ENCODE measurements at regions of chr5 and their contacts with region 1.

Region 1: DNA sequence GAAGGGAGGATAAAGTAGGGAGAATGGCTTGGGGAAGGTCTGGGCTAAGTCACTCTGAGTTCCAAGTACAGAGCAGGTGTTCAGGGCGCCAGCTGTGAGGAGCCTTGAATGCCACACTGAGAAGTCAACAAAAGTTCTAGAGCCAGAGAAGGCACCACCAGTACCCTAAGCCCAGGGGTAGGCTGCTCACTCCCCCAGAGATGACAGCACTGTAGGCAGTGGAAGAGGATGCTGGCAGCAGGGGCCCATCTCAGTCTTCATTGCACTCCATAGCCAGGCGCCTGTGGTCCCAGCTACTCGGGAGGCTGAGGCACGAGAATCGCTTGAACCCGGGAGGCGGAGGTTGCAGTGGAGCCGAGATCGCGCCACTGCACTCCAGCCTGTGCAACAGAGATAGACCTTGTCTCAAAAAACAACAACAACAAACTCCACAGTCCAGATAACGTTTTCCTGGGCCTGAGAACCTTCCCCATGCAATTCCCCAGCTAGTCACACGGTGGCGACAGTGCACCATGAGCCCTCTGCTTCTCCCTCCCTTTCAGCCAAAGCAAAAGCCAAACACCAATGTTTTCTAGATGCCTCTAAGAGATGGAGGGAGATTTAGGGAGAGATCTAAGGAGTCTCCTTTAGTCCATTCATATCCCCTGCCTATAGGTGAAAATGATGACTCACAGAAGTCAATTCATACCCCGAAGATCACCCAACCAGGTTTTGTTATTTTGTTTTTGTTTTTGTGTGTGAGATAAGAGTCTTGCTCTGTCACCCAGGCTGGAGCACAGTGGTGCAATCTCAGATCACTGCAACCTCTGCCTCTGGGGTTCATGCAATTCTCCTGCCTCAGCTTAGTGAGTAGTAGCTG is 19.8 kb upstream of the NSD1 start:
- DNase-seq: no peak
- H3K4me3 ChIP-seq: no peak overlapping the region
- H3K27me3 ChIP-seq: no peaks in the 10 kb centered on the region
- CTCF ChIP-seq: peak; percentile 99

Region 2: DNA sequence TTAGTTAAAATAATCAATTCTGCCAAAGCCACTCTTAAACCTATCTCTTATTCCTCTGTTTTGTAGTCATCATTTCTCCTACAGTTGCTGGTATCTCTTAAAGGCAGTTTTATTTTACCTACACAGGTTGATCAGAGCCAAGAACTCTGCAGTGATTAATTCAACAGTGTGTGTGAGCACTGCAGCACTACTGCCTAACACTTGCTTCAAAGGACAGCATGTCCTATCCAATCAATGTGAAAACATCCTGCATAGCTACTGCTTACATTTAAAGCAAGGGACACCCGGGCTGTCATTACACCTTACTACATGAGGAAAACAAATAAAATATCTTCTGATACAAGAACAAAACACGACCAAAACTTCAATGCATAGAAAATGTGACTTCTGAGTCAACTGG is 169.5 kb before region 1 on chr5:
- CTCF ChIA-PET with region 1: no interaction called
- POLR2A ChIA-PET with region 1: no interaction called
- DNase-seq: no peak
- H3K4me3 ChIP-seq: no peak overlapping the region
- H3K27me3 ChIP-seq: no peaks in the 10 kb centered on the region
- CTCF ChIP-seq: no peak

Region 3: DNA sequence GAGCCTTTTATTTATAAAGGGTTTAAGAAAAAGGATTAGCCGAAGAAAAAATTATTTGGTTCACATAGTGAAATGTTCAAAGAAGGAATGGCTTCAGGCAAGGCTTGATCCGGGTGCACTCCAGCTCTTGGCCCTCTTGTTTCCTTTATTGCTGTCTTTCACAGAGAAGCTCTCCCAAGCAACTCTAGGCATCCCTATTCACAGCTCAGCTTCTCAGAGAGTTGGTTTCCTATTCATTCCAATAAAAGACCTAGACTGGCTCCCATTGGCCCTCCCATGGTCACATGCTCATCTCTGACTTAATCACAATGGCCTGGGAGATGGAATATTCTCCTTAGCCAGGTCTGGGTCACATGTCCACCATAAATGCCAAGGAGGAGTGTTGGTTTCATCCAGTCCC is 36.5 kb before region 1 on chr5:
- CTCF ChIA-PET with region 1: interaction called, 105 read pairs
- POLR2A ChIA-PET with region 1: no interaction called
- DNase-seq: no peak
- H3K4me3 ChIP-seq: no peak overlapping the region
- H3K27me3 ChIP-seq: no peaks in the 10 kb centered on the region
- CTCF ChIP-seq: no peak

Region 4: GRCh38 chr5:177124486-177124991 is 10.7 kb after region 1 on chr5:
- CTCF ChIA-PET with region 1: interaction called, 33 read pairs
- POLR2A ChIA-PET with region 1: no interaction called
- DNase-seq: no peak
- H3K4me3 ChIP-seq: no peak overlapping the region
- H3K27me3 ChIP-seq: no peaks in the 10 kb centered on the region
- CTCF ChIP-seq: no peak

Region 5: GRCh38 chr5:177271113-177271512 is 157.3 kb after region 1 on chr5:
- CTCF ChIA-PET with region 1: interaction called, 18 read pairs
- POLR2A ChIA-PET with region 1: no interaction called
- DNase-seq: no peak
- H3K4me3 ChIP-seq: no peak overlapping the region
- H3K27me3 ChIP-seq: no peaks in the 10 kb centered on the region
- CTCF ChIP-seq: no peak

Region 6: GRCh38 chr5:177311723-177312648 is 198.2 kb after region 1 on chr5 and contains the start of gene MXD3:
- CTCF ChIA-PET with region 1: interaction called, 84 read pairs
- POLR2A ChIA-PET with region 1: no interaction called
- DNase-seq: peak; percentile 62
- H3K4me3 ChIP-seq: peak within 1 kb of the TSS; percentile 66
- H3K27me3 ChIP-seq: no peaks in the 10 kb centered on the region
- CTCF ChIP-seq: no peak
- polyA plus RNA-seq, gene MXD3: 11.8 and 18.1 TPM in 2 replicates

Measured in BJ (cell line).